Lower leg skin (tissue), 4 donors: ENCODE measurements at regions of chr5 and their contacts with region 1.

Region 1: GRCh38 chr5:157592594-157592993 is 17.0 kb upstream of the ADAM19 start:
- DNase-seq: no peak
- H3K4me3 ChIP-seq: no peak overlapping the region
- CTCF ChIP-seq: no peak
- POLR2A ChIP-seq: no peak

Region 2: DNA sequence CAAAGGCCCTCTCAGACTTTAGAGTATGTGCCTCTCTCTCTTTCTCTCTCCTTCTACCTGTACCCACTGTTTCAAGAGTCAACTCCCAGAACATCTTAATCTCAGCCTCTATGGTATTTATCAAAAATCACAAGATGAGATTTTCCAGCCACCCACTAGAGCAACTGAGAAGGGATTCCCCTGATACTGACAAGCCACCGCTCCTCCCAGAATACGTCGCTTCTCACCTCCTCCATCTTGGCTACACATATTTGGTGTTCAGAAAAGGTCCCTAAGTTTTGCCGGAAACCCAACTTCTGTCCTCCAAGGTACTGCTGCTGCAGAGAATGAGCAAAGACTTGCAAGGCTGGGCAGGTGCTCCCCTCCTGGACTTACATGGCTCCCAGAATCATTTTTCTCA is 432.6 kb before region 1 on chr5:
- intact Hi-C with region 1: loop called (anchors 5 kb)
- DNase-seq: peak in 1 of 2 donors; percentile 29
- H3K4me3 ChIP-seq: no peak overlapping the region
- CTCF ChIP-seq: no peak
- POLR2A ChIP-seq: no peak

Region 3: DNA sequence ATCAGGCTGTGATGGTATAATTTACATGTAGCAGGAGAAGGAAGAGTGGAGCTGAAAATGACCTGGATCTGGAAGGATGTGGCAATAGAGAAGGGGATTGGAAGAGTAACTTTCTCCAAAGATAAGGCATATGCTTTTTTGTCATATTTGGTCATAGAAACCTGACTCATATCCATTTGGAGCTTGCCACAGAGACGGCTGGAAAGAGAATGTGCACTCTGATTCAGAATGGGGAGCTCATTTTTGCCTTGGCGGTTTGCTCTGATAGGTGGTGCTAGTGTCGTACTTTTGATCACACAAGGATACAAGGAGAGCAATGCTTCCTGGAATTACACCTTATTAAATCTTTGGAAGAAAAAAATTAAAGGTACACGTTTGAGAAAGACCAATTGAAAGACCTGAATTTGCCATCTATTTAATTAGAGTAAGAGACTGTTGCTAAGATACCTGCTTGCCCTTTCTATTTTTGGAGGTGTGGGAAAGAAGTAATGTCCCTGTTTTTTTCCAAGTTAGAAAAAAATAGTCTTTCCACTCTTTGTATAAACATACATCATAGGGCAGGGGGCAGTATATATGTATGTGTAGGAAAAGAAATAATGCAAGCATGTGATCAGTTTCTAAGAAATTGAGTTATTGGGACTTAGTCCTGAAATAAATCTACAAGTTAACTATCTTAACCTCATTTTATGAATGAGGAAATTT is 156.3 kb after region 1 on chr5:
- intact Hi-C with region 1: no loop called
- DNase-seq: no peak
- H3K4me3 ChIP-seq: no peak overlapping the region
- CTCF ChIP-seq: no peak
- POLR2A ChIP-seq: no peak